Calu3 (cell line): ENCODE measurements at regions of chr17 and their contacts with region 1.

Region 1: GRCh38 chr17:1256699-1257098 is 13.5 kb upstream of the BHLHA9 start:
- DNase-seq: no peak
- H3K4me3 Mint-ChIP-seq: no peak overlapping the region
- H3K27ac Mint-ChIP-seq: no peak overlapping the region
- H3K4me1 Mint-ChIP-seq: no peaks in the 10 kb centered on the region
- H3K27me3 Mint-ChIP-seq: no peaks in the 10 kb centered on the region
- CTCF ChIP-seq: no peak

Region 2: GRCh38 chr17:1304962-1305563 is 48.4 kb after region 1 on chr17:
- CTCF ChIA-PET with region 1: no interaction called
- intact Hi-C with region 1: no loop called
- DNase-seq: no peak
- H3K4me3 Mint-ChIP-seq: no peak overlapping the region
- H3K27ac Mint-ChIP-seq: no peak overlapping the region
- H3K4me1 Mint-ChIP-seq: no peaks in the 10 kb centered on the region
- H3K27me3 Mint-ChIP-seq: peaks cover 50% of the 10 kb centered on the region
- CTCF ChIP-seq: no peak

Region 3: GRCh38 chr17:1331708-1332107 is 75.0 kb after region 1 on chr17:
- CTCF ChIA-PET with region 1: no interaction called
- intact Hi-C with region 1: loop called (anchors 5 kb)
- DNase-seq: no peak
- H3K4me3 Mint-ChIP-seq: no peak overlapping the region
- H3K27ac Mint-ChIP-seq: no peak overlapping the region
- H3K4me1 Mint-ChIP-seq: no peaks in the 10 kb centered on the region
- H3K27me3 Mint-ChIP-seq: no peaks in the 10 kb centered on the region
- CTCF ChIP-seq: no peak

Region 4: GRCh38 chr17:1488030-1488863 is 231.5 kb after region 1 on chr17:
- CTCF ChIA-PET with region 1: no interaction called
- intact Hi-C with region 1: no loop called
- DNase-seq: peak; percentile 83
- H3K4me3 Mint-ChIP-seq: peak overlapping the region; percentile 73
- H3K27ac Mint-ChIP-seq: peak overlapping the region; percentile 74
- H3K4me1 Mint-ChIP-seq: peaks cover 9% of the 10 kb centered on the region
- H3K27me3 Mint-ChIP-seq: no peaks in the 10 kb centered on the region
- CTCF ChIP-seq: no peak